ENCODE measurements at regions of chr22 and their contacts with region 1.

Region 1: DNA sequence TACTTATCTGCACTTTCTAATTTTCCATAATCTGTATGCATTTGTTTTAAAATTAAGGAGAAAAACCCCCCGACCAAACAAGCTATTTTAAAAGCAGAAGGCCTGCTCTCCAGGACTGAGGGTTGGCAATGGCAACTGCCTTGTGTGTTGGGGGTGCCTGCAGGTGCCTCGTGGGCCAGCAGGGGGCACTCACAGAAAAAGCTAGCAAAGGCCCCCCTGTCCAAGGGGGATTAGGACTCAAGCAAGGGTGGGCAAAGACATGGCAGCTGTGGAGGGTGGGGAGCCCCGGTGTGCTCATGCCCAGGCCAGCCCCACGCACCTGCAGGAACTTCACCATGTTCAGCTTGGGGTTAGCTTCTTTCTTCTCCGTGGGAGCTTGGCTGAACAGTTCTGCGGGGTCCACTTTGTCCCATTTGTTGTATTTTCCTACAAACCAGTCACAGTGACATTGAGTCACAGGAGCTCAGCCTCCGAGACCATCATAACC is 10.3 kb downstream of the TOP3B start:
- DNase-seq: peak; percentile 78
- ATAC-seq: peak; percentile 92
- H3K4me3 Mint-ChIP-seq: no peak overlapping the region
- H3K27ac Mint-ChIP-seq: no peak overlapping the region
- H3K4me1 Mint-ChIP-seq: no peaks in the 10 kb centered on the region
- H3K27me3 Mint-ChIP-seq: peaks cover 3% of the 10 kb centered on the region; the same call in 1 of the 2 replicates
- CTCF ChIP-seq: peak; percentile 78

Region 2: DNA sequence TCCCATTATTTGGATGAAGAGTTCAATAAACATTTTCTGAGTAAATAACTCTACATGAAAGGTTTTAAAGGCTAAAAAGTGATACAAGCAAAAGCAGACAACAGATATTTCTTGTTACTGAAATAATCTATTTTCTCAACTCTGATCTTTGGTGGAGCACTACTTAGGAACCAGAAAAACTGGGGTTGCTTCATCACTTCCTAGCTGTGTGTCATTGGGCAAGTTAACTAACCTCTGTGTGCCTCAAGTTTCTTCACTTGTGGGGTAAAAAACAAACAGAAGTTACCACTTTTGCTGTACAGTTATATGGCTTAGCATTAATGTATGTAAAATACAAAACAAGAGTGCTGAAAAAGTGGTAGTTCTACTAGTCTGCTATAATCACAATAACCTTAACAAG is 110.5 kb before region 1 on chr22:
- CTCF ChIA-PET with region 1: no interaction called
- POLR2A ChIA-PET with region 1: no interaction called
- DNase-seq: no peak
- ATAC-seq: no peak
- H3K4me3 Mint-ChIP-seq: peak overlapping the region; percentile 3; the same call in 1 of the 2 replicates
- H3K27ac Mint-ChIP-seq: peak overlapping the region; percentile 71
- H3K4me1 Mint-ChIP-seq: peaks cover 64% of the 10 kb centered on the region
- H3K27me3 Mint-ChIP-seq: no peaks in the 10 kb centered on the region
- CTCF ChIP-seq: no peak

Region 3: DNA sequence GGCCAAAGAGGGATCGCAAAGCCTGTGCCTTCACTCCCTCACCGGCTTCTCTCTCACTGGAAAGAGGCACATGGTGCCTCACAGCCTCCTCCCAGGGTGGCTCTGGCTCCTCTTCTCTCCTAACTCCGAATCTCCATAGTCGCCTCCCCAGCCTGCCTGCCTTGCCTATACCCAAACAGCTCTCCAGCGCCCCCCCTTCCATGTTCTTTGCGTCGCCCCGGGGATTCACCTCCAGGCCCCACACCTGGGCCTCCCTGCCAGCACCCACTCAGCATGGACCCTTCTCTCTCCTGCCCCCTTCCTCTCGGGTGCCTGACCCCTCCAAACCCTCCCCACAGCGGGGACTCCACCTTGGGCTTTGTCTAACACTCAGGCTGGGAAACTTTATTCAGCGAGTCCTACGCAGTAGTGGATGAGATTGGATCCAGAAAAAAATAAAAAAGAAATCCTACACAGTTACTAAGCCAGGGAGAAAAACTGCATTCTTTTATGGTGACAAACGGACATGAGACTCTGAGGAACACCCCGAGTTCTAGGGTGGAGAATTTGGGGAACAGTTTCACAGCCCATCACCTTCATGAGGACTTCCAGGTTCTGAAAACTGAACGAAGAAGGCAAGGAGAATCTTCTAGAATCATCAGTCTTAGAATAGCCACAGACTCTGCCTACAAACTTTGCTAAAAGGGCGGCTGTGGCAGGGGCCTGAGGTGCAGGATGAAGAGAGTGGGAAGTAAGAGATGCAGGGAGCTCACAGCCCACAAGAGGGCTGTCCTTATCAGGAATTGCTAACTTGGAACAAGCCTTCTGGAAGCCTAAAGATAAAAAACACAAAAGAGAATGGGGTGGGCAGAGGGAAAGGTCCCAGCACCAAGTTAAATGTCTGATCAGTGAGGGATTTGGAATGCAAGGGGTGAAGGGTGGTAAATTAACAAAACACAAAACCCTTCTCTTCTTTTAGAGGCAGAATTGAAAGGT is 25.0 kb before region 1 on chr22:
- CTCF ChIA-PET with region 1: interaction called, 32 read pairs
- POLR2A ChIA-PET with region 1: no interaction called
- DNase-seq: peak; percentile 65
- ATAC-seq: peak; percentile 69
- H3K4me3 Mint-ChIP-seq: no peak overlapping the region
- H3K27ac Mint-ChIP-seq: peak overlapping the region; percentile 61
- H3K4me1 Mint-ChIP-seq: peaks cover 24% of the 10 kb centered on the region
- H3K27me3 Mint-ChIP-seq: peaks cover 14% of the 10 kb centered on the region
- CTCF ChIP-seq: no peak

Region 4: GRCh38 chr22:21952586-21953571 is 19.5 kb before region 1 on chr22 and contains the start of gene PPM1F:
- CTCF ChIA-PET with region 1: interaction called, 32 read pairs
- POLR2A ChIA-PET with region 1: no interaction called
- DNase-seq: peak; percentile 86
- ATAC-seq: peak; percentile 77
- H3K4me3 Mint-ChIP-seq: peak within 1 kb of the TSS; percentile 76
- H3K27ac Mint-ChIP-seq: no peak within 1 kb of the TSS
- H3K4me1 Mint-ChIP-seq: peaks cover 8% of the 10 kb centered on the region
- H3K27me3 Mint-ChIP-seq: peaks cover 26% of the 10 kb centered on the region
- CTCF ChIP-seq: peak; percentile 92
- total RNA-seq, gene PPM1F: 23.9 to 30.6 TPM (median 28.6 TPM) in 3 replicates

Measured in WTC11 (cell line).